Ascending aorta (tissue), 2 donors: ENCODE measurements at regions of chr1 and their contacts with region 1.

Region 1: GRCh38 chr1:237012788-237013383 is 8.6 kb upstream of the MT1HL1 start:
- DNase-seq: peak; percentile 84 to 96
- H3K4me3 ChIP-seq: no peak overlapping the region
- H3K27ac ChIP-seq: peak overlapping the region; percentile 93 to 94
- H3K4me1 ChIP-seq: peaks cover 0 to 21% of the 10 kb centered on the region in 2 donors
- H3K27me3 ChIP-seq: no peaks in the 10 kb centered on the region
- CTCF ChIP-seq: no peak

Region 2: DNA sequence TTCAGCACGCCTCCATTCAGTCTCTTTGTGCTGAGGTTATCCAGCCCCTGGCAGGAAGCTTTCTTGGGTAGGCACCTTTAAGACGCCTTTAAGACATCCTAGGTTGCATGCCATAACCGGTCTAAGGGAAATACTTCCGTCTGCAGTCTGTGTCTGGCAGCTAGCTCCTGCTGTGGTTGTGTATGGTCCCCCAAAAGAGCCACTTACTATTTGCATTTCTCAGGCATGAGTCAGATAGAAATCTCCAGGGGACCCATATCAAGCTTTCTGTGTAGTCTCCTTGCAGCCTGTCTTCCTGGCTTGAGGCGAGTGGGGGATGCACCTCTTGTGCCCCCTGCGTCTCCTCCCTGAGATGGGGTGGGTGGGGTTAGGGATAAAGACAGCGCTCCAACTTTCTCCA is 19.1 kb after region 1 on chr1:
- intact Hi-C with region 1: loop called (anchors 1 kb)
- DNase-seq: no peak
- H3K4me3 ChIP-seq: peak overlapping the region in 1 of 2 donors; percentile 41
- H3K27ac ChIP-seq: peak overlapping the region; percentile 57 to 77
- H3K4me1 ChIP-seq: peaks cover 4 to 27% of the 10 kb centered on the region in 2 donors
- H3K27me3 ChIP-seq: no peaks in the 10 kb centered on the region
- CTCF ChIP-seq: no peak